PC-9 (cell line): ENCODE measurements at regions of chr3 and their contacts with region 1.

Region 1: GRCh38 chr3:177197041-177197727 is at the start of gene TBL1XR1:
- DNase-seq: peak; percentile 92 to 96
- H3K4me3 ChIP-seq: peak within 1 kb of the TSS; percentile 82
- H3K27ac ChIP-seq: peak within 1 kb of the TSS; percentile 97
- H3K4me1 ChIP-seq: peaks cover 44% of the 10 kb centered on the region
- H3K27me3 ChIP-seq: no peaks in the 10 kb centered on the region
- CTCF ChIP-seq: no peak
- total RNA-seq, gene TBL1XR1: 232 and 243 TPM in 2 replicates

Region 2: DNA sequence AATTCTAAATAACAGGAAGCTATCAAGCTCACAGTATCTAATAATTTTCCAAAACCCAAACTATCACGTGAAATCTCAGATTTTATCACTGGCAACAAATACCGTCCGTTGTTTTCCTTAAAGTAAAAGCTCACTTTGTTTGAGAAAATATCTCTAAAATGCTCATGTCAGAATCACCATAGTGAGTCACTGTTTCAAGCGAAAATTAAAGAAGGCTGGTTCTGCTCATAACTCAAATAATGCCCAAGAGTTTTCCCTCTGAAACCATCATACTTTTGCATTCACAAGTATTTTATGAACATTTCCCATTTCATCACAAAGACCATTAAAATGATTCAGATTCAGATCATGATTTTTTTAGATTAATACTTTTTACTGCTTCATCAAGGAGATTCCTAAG is 50.5 kb before region 1 on chr3:
- CTCF ChIA-PET with region 1: interaction called, 3 read pairs
- POLR2A ChIA-PET with region 1: no interaction called
- intact Hi-C with region 1: loop called (anchors 2 kb)
- DNase-seq: no peak
- H3K4me3 ChIP-seq: no peak overlapping the region
- H3K27ac ChIP-seq: 0 out of 2 replicates have a peak overlapping the region, but pooled peaks have one; percentile 6
- H3K4me1 ChIP-seq: peaks cover 41% of the 10 kb centered on the region
- H3K27me3 ChIP-seq: no peaks in the 10 kb centered on the region
- CTCF ChIP-seq: no peak

Region 3: DNA sequence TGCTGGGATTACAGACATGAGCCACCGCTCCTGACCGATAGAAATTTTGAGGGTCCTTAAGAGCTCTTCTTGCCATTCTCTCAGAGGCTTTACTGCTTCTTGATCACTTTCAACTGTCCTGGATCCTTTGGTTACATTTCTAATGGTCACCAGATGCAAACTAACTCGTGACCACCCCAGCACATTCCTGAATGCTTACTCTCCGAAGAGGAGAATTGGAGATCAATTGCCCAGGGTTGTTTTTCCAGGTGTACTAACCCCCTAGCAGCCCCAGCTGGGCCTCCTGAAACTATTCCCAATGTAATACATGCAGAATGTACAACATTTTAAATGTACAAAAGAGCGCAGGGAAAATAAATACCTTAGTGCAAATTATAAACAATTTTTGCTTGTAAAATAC is 65.2 kb after region 1 on chr3:
- CTCF ChIA-PET with region 1: no interaction called
- POLR2A ChIA-PET with region 1: no interaction called
- intact Hi-C with region 1: no loop called
- DNase-seq: peak in 1 of 2 experiments; percentile 52
- H3K4me3 ChIP-seq: no peak overlapping the region
- H3K27ac ChIP-seq: no peak overlapping the region
- H3K4me1 ChIP-seq: peaks cover 7% of the 10 kb centered on the region; the same call in 1 of the 2 replicates
- H3K27me3 ChIP-seq: no peaks in the 10 kb centered on the region
- CTCF ChIP-seq: no peak

Region 4: GRCh38 chr3:177345049-177345972 is 148.1 kb after region 1 on chr3:
- CTCF ChIA-PET with region 1: no interaction called
- POLR2A ChIA-PET with region 1: no interaction called
- intact Hi-C with region 1: loop called (anchors 1 kb)
- DNase-seq: peak; percentile 93 to 98
- H3K4me3 ChIP-seq: peak overlapping the region; percentile 6; the same call in 1 of the 2 replicates
- H3K27ac ChIP-seq: peak overlapping the region; percentile 87
- H3K4me1 ChIP-seq: peaks cover 28% of the 10 kb centered on the region
- H3K27me3 ChIP-seq: no peaks in the 10 kb centered on the region
- CTCF ChIP-seq: no peak

Region 5: DNA sequence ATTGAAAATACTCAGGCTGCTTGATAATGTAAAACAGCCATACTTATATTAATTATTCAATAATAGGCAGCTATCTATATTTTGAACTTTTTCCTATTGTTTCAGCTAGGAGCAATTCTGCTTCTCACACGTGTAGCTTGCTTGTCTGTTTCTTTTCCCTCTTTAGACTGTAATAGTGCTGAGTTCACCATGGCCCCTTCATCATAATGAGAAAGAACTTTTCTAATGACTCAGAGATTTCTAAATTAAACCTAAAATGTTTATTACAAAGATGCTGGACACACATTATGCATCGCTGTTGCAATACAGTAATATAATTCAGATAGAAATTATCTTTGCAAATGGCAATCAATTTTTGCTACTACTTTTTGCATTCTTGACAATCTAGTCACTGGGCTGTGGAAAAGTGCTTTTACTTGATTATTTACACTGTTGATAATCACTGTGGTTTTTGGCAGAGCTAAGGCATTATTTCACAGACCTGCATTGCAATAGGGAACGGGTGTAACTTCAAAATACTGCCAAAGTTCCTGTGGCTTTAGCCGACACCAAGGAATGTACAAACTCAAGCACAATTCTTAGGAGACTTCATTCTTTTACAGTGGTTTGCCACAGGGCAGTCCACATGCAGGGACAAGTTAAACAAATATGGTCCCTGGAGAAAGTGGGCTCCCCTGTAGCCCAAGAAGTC is 281.1 kb after region 1 on chr3:
- CTCF ChIA-PET with region 1: no interaction called
- POLR2A ChIA-PET with region 1: no interaction called
- intact Hi-C with region 1: loop called (anchors 1 kb)
- DNase-seq: peak; percentile 84 to 100
- H3K4me3 ChIP-seq: no peak overlapping the region
- H3K27ac ChIP-seq: peak overlapping the region; percentile 85
- H3K4me1 ChIP-seq: peaks cover 33% of the 10 kb centered on the region
- H3K27me3 ChIP-seq: no peaks in the 10 kb centered on the region
- CTCF ChIP-seq: no peak

Region 6: GRCh38 chr3:177609613-177610012 is 412.4 kb after region 1 on chr3:
- CTCF ChIA-PET with region 1: no interaction called
- POLR2A ChIA-PET with region 1: no interaction called
- intact Hi-C with region 1: no loop called
- DNase-seq: no peak
- H3K4me3 ChIP-seq: no peak overlapping the region
- H3K27ac ChIP-seq: no peak overlapping the region
- H3K4me1 ChIP-seq: peaks cover 43% of the 10 kb centered on the region
- H3K27me3 ChIP-seq: no peaks in the 10 kb centered on the region
- CTCF ChIP-seq: no peak

Region 7: DNA sequence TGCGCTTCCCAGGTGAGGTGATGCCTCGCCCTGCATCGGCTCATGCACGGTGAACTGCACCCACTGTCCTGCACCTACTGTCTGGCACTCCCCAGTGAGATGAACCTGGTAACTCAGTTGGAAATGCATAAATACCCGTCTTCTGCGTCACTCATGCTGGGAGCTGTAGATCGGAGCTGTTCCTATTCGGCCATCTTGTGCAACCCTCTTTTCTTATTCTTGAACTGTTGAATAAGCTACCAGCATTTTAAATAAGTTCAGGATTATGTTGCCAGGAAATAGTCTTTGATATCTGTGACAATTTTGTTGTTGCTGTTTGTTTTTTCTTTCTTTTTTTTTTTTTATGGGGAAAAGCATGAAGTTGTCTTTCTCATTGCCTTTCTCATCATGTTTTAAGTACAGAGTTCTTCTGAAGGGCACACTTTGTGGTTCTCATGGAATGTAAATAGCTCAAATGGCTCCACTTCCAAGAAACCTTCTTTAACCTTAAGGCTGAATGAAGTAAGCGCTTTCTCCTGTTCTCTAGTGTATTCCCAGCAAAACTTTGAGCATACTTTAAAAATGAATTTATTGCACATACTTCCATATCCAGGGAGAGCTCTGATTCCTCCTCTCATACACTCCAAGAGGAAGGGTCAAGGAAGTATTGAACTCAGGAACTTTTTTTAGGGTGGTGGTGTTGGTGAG is 468.1 kb after region 1 on chr3:
- CTCF ChIA-PET with region 1: no interaction called
- POLR2A ChIA-PET with region 1: no interaction called
- intact Hi-C with region 1: loop called (anchors 2 kb)
- DNase-seq: no peak
- H3K4me3 ChIP-seq: no peak overlapping the region
- H3K27ac ChIP-seq: no peak overlapping the region
- H3K4me1 ChIP-seq: no peaks in the 10 kb centered on the region
- H3K27me3 ChIP-seq: no peaks in the 10 kb centered on the region
- CTCF ChIP-seq: no peak

Region 8: DNA sequence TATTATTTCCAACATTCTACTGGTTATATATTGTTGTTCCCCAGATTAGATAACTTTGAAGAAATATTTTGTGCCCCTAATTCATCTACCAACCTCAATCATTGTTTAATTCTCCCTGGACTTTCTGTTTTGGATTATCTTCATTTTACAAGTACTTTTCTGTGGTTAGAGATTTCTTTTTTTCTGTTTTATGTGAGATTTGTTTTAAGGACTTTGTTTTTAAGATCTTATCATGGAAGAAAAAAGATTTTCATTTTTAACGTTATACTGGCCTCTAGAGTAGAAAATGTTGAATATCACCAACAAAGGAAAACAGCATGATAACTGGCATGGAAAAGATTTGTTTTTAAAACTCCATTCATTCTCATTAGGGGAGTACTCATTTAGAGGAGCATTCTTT is 1128.1 kb after region 1 on chr3:
- CTCF ChIA-PET with region 1: no interaction called
- POLR2A ChIA-PET with region 1: no interaction called
- intact Hi-C with region 1: loop called (anchors 2 kb)
- DNase-seq: no peak
- H3K4me3 ChIP-seq: no peak overlapping the region
- H3K27ac ChIP-seq: no peak overlapping the region
- H3K4me1 ChIP-seq: peaks cover 13% of the 10 kb centered on the region
- H3K27me3 ChIP-seq: no peaks in the 10 kb centered on the region
- CTCF ChIP-seq: peak; percentile 72

Region 9: GRCh38 chr3:178736300-178736699 is 1539.1 kb after region 1 on chr3:
- CTCF ChIA-PET with region 1: no interaction called
- POLR2A ChIA-PET with region 1: no interaction called
- intact Hi-C with region 1: no loop called
- DNase-seq: no peak
- H3K4me3 ChIP-seq: no peak overlapping the region
- H3K27ac ChIP-seq: no peak overlapping the region
- H3K4me1 ChIP-seq: no peaks in the 10 kb centered on the region
- H3K27me3 ChIP-seq: no peaks in the 10 kb centered on the region
- CTCF ChIP-seq: no peak